K562 (cell line): ENCODE measurements at regions of chr4 and their contacts with region 1.

Region 1: DNA sequence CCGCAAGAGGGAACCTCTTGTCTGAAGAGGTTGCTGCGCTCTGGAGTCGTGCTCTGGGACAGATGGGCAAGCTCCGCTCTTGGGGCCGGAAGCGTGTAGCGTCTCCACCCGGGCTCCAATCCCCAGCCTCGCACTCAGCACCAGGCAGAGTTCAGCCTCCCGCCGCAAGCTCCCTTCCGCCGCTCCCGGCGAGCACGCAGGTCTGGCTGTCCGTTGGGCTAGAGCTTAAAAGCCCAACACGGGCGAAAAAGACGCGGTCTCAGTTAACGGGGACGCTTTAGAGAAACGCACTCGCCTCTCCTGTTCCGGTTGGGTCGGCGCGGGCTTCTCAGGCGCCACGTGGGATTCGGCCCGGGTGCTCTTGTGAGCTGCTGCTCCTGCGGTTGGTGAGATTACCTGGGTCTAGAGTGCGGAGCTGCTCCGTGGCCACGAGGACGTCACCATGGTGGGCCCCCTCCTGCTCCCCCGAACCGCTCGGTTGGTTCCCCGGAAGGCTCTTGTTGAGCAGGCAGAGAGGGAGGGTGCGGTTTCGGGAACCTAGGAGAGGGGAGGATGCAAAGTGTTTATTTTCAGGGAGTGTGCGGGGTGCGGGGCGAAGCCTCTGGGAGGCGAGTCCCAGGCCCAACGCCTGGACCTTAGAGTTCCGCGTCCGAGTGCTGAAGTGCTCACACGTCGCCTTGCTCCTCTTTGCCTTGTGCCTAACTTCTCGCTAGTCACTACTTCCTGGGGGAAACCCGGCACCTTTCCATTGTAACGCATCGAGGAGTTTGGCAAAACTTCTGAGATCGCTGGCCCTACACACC is at the start of gene TMA16:
- DNase-seq: peak; percentile 78 to 95 (median 84)
- ATAC-seq: peak; percentile 93
- H3K4me3 ChIP-seq: peak within 1 kb of the TSS; percentile 97
- H3K27ac ChIP-seq: peak within 1 kb of the TSS; percentile 99
- H3K4me1 ChIP-seq: peaks cover 0 to 16% of the 10 kb centered on the region in 2 experiments; a peak in 2 of 5 replicates
- H3K27me3 ChIP-seq: no peaks in the 10 kb centered on the region
- CTCF ChIP-seq: no peak
- EP300 ChIP-seq: peak; percentile 32; the same call in 1 of the 2 replicates
- POLR2A ChIP-seq: peak; percentile 93
- RAD21 ChIP-seq: no peak
- polyA plus RNA-seq, gene TMA16: 51.4 to 67.2 TPM

Region 2: DNA sequence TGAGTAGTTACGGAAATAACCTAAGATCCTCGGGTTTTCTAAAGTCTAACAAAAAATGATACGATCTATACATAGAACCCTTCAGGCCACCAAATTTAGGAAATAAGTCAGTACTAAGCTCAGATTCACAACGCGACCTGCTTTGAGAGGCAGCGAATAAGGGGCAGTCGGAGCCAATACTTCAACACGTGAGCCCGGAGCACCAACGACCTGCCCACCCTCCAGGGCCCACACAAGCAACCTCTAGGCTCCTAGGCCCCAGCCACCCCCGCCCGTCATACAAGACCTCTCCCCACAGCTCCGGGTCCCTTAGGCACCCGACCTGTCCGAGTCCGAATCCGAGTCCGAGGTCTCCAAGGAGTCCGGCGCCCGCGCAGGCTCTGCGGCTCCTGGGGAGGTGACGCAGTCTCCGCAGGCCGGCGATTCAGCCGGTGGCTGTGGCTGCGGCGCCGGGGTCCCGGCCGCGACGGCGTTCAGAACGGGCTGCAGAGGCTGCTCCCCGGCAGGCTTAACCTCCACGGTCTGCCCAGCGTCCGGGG is 328.5 kb before region 1 on chr4:
- CTCF ChIA-PET with region 1: no interaction called
- POLR2A ChIA-PET with region 1: no interaction called
- in situ Hi-C with region 1: no loop called
- intact Hi-C with region 1: loop called (anchors 10 kb)
- DNase-seq: peak; percentile 49 to 71 (median 56)
- ATAC-seq: peak; percentile 84
- H3K4me3 ChIP-seq: peak overlapping the region; percentile 89
- H3K27ac ChIP-seq: peak overlapping the region; percentile 91
- H3K4me1 ChIP-seq: peaks cover 7% of the 10 kb centered on the region in 2 experiments; a peak in 3 of 5 replicates
- H3K27me3 ChIP-seq: no peaks in the 10 kb centered on the region
- CTCF ChIP-seq: no peak
- EP300 ChIP-seq: no peak
- POLR2A ChIP-seq: no peak
- RAD21 ChIP-seq: no peak

Region 3: DNA sequence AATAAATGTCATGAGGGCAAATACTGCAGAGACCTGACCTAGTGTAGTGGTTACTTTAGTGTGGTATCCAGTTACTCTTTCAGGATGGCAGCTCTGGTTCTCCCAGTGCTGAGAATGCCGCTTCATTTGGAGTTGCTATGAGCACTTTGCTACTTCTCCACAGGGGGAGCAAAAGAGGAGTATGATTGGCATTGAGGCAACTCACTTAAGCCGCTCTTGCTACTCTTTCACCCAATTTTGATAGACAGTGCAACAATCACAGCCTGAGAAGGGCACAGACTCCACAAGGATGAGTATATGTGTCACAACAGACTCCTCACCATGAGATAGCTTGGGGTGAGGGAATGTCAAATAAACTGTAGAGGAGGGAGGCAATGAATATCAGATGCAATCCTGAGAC is 243.4 kb before region 1 on chr4:
- CTCF ChIA-PET with region 1: no interaction called
- POLR2A ChIA-PET with region 1: no interaction called
- in situ Hi-C with region 1: no loop called
- intact Hi-C with region 1: no loop called
- DNase-seq: no peak
- ATAC-seq: peak; percentile 89
- H3K4me3 ChIP-seq: no peak overlapping the region
- H3K27ac ChIP-seq: no peak overlapping the region
- H3K4me1 ChIP-seq: no peaks in the 10 kb centered on the region
- H3K27me3 ChIP-seq: no peaks in the 10 kb centered on the region
- CTCF ChIP-seq: peak in 2 of 3 experiments; percentile 34 to 51; a peak in 3 of 6 replicates
- EP300 ChIP-seq: no peak
- POLR2A ChIP-seq: no peak
- RAD21 ChIP-seq: no peak

Region 4: DNA sequence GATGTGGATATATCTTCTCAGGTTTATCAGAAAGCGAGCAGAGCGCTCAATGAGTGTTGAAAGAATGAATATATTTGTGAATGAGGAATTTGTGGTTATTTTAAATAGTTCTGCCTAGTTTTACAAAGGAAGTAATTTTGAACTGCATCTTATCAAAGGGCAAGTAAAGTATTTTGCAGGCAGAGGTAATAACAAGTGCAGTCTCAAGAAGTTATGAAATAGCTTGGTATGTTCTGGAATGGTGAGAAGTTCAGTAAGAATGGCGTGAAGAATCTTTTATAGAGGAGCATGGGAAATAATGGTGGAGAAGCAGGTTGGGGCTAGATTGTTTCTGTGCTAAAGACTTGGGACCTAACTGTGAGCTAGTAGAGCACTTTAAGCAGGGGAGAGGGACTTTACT is 10.8 kb after region 1 on chr4:
- CTCF ChIA-PET with region 1: no interaction called
- POLR2A ChIA-PET with region 1: interaction called, 17 read pairs
- in situ Hi-C with region 1: no loop called
- intact Hi-C with region 1: no loop called
- DNase-seq: no peak
- ATAC-seq: no peak; the same call in 2 of the 3 replicates
- H3K4me3 ChIP-seq: no peak overlapping the region
- H3K27ac ChIP-seq: no peak overlapping the region
- H3K4me1 ChIP-seq: no peaks in the 10 kb centered on the region; a peak in 1 of 5 replicates
- H3K27me3 ChIP-seq: no peaks in the 10 kb centered on the region
- CTCF ChIP-seq: no peak
- EP300 ChIP-seq: no peak
- POLR2A ChIP-seq: no peak
- RAD21 ChIP-seq: no peak

Region 5: DNA sequence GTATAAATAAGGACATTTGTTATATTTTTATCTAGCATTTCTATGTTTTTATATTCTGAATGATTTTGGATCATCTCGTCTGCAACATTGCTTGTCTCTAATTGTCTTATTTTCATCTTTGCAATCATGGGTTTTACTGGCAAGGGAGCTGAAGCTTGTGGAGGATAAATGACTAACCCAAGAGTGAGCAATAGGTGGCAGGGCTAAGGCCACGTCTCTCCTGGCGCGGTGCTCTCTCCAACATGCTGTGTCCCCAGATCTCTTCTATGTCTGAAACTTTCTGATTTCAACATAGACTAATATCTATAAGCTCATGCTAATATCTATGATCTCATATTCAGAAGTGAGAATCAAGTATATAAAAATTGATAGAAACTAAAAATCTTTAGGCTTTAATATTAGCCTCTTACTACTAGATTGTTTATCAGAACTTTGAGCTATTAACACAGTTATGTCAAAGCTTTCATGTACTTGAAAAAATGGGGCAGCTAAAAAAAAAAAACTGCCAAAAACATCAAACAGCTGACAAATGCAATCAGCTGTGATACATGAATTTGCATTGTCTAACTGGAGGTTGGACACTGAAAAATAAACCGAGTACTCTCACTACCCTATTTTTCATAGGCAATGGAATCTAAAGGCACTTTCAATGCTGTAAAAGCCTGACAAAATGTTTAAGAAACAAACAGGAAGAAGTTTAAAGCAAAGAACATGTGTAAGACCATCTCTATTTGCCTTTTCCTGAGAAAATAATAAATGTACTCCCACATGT is 169.1 kb after region 1 on chr4:
- CTCF ChIA-PET with region 1: no interaction called
- POLR2A ChIA-PET with region 1: no interaction called
- in situ Hi-C with region 1: no loop called
- intact Hi-C with region 1: no loop called
- DNase-seq: no peak
- ATAC-seq: no peak
- H3K4me3 ChIP-seq: no peak overlapping the region
- H3K27ac ChIP-seq: no peak overlapping the region
- H3K4me1 ChIP-seq: no peaks in the 10 kb centered on the region
- H3K27me3 ChIP-seq: no peaks in the 10 kb centered on the region
- CTCF ChIP-seq: no peak
- EP300 ChIP-seq: no peak
- POLR2A ChIP-seq: no peak
- RAD21 ChIP-seq: no peak